ENCODE measurements at regions of chr3 and their contacts with region 1.

Region 1: GRCh38 chr3:100254168-100254777 is 6.5 kb upstream of the TBC1D23 start:
- DNase-seq: peak; percentile 53 to 72 (median 60)
- H3K4me3 ChIP-seq: no peak overlapping the region
- H3K27ac ChIP-seq: peak overlapping the region in 1 of 2 donors; percentile 13
- H3K4me1 ChIP-seq: peaks cover 7% of the 10 kb centered on the region
- H3K27me3 ChIP-seq: no peaks in the 10 kb centered on the region
- CTCF ChIP-seq: peak; percentile 63 to 75 (median 66)
- EP300 ChIP-seq: no peak
- POLR2A ChIP-seq: no peak

Region 2: DNA sequence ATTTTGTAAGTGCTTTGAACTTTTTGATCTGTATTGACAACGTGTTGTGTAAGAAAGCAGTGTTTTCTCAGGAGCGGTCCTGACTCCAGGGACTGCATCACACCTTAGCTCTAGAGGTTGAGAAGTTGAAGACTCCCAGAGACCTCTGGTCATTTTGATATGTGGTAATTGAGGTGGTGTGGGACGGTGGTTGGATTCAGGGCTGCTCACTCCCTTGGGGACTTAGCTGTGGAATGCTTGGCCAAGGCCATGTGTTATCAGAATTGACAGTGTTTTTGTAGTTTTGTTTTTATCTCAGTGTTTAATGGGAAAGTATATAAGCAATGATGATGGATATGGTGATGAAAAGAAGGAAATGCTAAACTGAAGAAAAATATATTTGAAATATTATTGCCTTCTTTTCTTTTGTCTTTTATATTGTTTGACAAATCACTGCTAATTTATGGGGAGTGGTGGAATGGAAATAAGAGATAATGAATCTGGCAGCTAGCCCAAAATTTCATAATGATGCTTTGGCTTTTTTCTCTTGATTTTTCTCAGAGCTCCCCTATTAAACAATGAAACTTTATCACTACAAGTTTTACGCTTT is 420.6 kb before region 1 on chr3:
- intact Hi-C with region 1: loop called in 2 of 4 experiments (anchors 5 kb)
- DNase-seq: peak in 2 of 5 donors; percentile 23 to 30
- H3K4me3 ChIP-seq: no peak overlapping the region
- H3K27ac ChIP-seq: peak overlapping the region in 1 of 2 donors; percentile 43
- H3K4me1 ChIP-seq: peaks cover 4% of the 10 kb centered on the region
- H3K27me3 ChIP-seq: no peaks in the 10 kb centered on the region
- CTCF ChIP-seq: no peak
- EP300 ChIP-seq: no peak
- POLR2A ChIP-seq: no peak

Region 3: GRCh38 chr3:99842826-99843589 is 411.3 kb before region 1 on chr3:
- intact Hi-C with region 1: loop called (anchors 5 kb)
- DNase-seq: no peak
- H3K4me3 ChIP-seq: no peak overlapping the region
- H3K27ac ChIP-seq: peak overlapping the region in 1 of 2 donors; percentile 69
- H3K4me1 ChIP-seq: peaks cover 8% of the 10 kb centered on the region
- H3K27me3 ChIP-seq: no peaks in the 10 kb centered on the region
- CTCF ChIP-seq: peak in 2 of 3 donors; percentile 80 to 82
- EP300 ChIP-seq: no peak
- POLR2A ChIP-seq: no peak

Region 4: GRCh38 chr3:100068826-100069225 is 185.4 kb before region 1 on chr3:
- intact Hi-C with region 1: loop called in 3 of 4 experiments (anchors 5 to 10 kb)
- DNase-seq: peak; percentile 67 to 82 (median 77)
- H3K4me3 ChIP-seq: no peak overlapping the region
- H3K27ac ChIP-seq: peak overlapping the region in 1 of 2 donors; percentile 29
- H3K4me1 ChIP-seq: peaks cover 4% of the 10 kb centered on the region
- H3K27me3 ChIP-seq: no peaks in the 10 kb centered on the region
- CTCF ChIP-seq: peak in 2 of 3 donors; percentile 47 to 53
- EP300 ChIP-seq: no peak
- POLR2A ChIP-seq: no peak

Region 5: DNA sequence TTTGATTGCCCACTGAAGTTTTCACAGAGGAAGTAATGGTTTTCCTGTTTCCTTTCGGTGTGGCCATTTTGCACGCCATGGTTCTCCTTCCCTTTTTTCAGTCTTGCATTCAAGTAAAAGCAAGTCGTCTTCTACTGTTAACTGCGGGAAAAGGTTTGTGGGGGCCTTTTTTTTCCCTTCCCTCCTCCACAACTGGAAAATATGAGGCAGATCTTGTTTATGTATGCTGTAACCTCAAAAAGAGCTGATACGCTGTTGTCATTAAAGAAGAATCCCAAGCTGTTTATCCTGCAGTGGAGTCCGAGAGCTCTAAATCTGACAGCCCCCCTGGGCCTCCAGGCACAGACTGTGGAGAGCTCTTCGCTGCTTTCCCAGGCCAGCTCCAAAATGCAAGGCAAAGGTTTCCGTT is 180.4 kb before region 1 on chr3:
- intact Hi-C with region 1: loop called in 3 of 4 experiments (anchors 5 to 10 kb)
- DNase-seq: peak; percentile 57 to 63 (median 61)
- H3K4me3 ChIP-seq: no peak overlapping the region
- H3K27ac ChIP-seq: peak overlapping the region; percentile 31 to 63
- H3K4me1 ChIP-seq: peaks cover 13% of the 10 kb centered on the region
- H3K27me3 ChIP-seq: no peaks in the 10 kb centered on the region
- CTCF ChIP-seq: no peak
- EP300 ChIP-seq: no peak
- POLR2A ChIP-seq: peak; percentile 16